ENCODE measurements at regions of chr1 and their contacts with region 1.

Region 1: DNA sequence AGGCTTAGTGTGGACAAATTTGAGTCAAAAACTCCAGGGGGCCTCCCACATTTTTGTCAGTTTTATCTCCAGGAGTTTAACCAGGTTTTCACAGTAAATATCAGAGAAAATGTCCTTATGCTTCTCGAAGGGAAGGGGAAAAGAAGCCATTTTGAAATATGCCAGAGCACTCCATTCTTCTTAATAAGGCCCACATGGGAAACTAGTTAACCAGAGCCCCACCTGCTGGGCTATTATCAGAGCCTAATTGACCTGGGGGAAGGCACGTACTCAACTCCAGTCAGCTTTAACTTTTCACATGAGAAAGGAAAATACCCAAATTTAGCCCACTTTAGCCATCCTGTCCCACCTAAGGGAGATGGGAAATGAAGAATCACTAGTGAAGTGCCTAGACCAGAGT is 296.3 kb downstream of the PTBP2 start:
- DNase-seq: no peak
- ATAC-seq: no peak
- H3K4me3 ChIP-seq: no peak overlapping the region
- H3K4me3 Mint-ChIP-seq: no peak overlapping the region
- H3K27ac ChIP-seq: no peak overlapping the region
- H3K27ac Mint-ChIP-seq: no peak overlapping the region
- H3K4me1 ChIP-seq: no peaks in the 10 kb centered on the region
- H3K4me1 Mint-ChIP-seq: no peaks in the 10 kb centered on the region
- H3K27me3 ChIP-seq: no peaks in the 10 kb centered on the region
- H3K27me3 Mint-ChIP-seq: peaks cover 10% of the 10 kb centered on the region
- CTCF ChIP-seq: no peak

Region 2: DNA sequence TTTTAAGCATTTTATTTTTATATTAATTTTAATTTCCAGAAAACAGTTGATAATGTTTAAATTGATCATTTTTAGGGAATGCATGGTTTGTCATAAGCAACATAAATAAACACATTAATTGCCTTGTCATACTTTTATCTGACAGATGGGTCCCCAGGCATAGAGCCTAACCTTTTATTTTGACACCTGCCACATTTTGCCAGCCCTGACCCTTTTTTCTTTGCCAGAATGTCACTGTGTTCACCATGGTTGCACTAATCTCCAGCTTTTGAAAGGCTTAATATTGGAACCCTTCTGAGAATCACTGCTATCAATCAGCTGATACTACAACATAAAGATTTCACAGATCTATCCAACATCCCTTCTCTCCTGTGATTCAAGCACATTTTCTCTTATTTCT is 958.9 kb after region 1 on chr1:
- CTCF ChIA-PET with region 1: no interaction called
- POLR2A ChIA-PET with region 1: no interaction called
- intact Hi-C with region 1: loop called in 1 of 2 experiments (anchors 5 kb)
- DNase-seq: no peak
- ATAC-seq: no peak
- H3K4me3 ChIP-seq: no peak overlapping the region
- H3K4me3 Mint-ChIP-seq: no peak overlapping the region
- H3K27ac ChIP-seq: no peak overlapping the region
- H3K27ac Mint-ChIP-seq: no peak overlapping the region
- H3K4me1 ChIP-seq: no peaks in the 10 kb centered on the region
- H3K4me1 Mint-ChIP-seq: no peaks in the 10 kb centered on the region
- H3K27me3 ChIP-seq: no peaks in the 10 kb centered on the region
- H3K27me3 Mint-ChIP-seq: peaks cover 5% of the 10 kb centered on the region
- CTCF ChIP-seq: no peak

Measured in CD8-positive, alpha-beta T cell (primary cell).